Cardiac septum (tissue), 1 donor: ENCODE measurements at regions of chr19 and their contacts with region 1.

Region 1: GRCh38 chr19:35421362-35421761 is 26.7 kb upstream of the FFAR2 start:
- DNase-seq: no peak

Region 2: DNA sequence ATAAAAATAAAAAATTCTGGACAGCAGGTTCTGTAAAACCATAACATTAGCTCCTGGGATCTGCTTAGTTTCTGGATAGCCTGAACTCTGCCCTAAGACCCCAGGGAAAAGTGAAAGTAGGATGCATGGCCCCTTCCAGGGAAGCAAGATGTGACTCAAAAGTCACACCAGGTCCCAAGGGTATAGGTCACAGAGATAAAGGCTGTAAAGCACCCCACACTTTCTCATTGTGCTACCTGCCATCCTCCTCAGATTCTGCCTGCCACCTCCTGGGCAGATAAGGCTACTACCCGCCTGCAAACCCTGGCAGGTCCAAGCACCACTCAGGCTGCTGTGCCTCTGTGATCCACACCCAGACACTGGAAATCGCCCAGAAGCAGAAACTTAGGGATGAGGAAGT is 47.3 kb after region 1 on chr19:
- intact Hi-C with region 1: loop called (anchors 5 kb)
- DNase-seq: no peak